ENCODE measurements at regions of chr1 and their contacts with region 1.

Region 1: GRCh38 chr1:209354111-209354839 is 229.2 kb upstream of the CAMK1G start:
- DNase-seq: peak; percentile 83
- ATAC-seq: peak; percentile 90
- H3K4me3 Mint-ChIP-seq: no peak overlapping the region
- H3K27ac Mint-ChIP-seq: peak overlapping the region; percentile 44; the same call in 1 of the 2 replicates
- H3K4me1 Mint-ChIP-seq: peaks cover 61% of the 10 kb centered on the region
- H3K27me3 Mint-ChIP-seq: no peaks in the 10 kb centered on the region
- CTCF ChIP-seq: peak; percentile 84

Region 2: GRCh38 chr1:209207701-209208286 is 146.5 kb before region 1 on chr1:
- CTCF ChIA-PET with region 1: interaction called, 34 read pairs
- POLR2A ChIA-PET with region 1: no interaction called
- DNase-seq: peak; percentile 83
- ATAC-seq: peak; percentile 91
- H3K4me3 Mint-ChIP-seq: peak overlapping the region; percentile 65
- H3K27ac Mint-ChIP-seq: no peak overlapping the region
- H3K4me1 Mint-ChIP-seq: peaks cover 24% of the 10 kb centered on the region
- H3K27me3 Mint-ChIP-seq: peaks cover 9% of the 10 kb centered on the region
- CTCF ChIP-seq: peak; percentile 50; the same call in 1 of the 2 replicates

Region 3: DNA sequence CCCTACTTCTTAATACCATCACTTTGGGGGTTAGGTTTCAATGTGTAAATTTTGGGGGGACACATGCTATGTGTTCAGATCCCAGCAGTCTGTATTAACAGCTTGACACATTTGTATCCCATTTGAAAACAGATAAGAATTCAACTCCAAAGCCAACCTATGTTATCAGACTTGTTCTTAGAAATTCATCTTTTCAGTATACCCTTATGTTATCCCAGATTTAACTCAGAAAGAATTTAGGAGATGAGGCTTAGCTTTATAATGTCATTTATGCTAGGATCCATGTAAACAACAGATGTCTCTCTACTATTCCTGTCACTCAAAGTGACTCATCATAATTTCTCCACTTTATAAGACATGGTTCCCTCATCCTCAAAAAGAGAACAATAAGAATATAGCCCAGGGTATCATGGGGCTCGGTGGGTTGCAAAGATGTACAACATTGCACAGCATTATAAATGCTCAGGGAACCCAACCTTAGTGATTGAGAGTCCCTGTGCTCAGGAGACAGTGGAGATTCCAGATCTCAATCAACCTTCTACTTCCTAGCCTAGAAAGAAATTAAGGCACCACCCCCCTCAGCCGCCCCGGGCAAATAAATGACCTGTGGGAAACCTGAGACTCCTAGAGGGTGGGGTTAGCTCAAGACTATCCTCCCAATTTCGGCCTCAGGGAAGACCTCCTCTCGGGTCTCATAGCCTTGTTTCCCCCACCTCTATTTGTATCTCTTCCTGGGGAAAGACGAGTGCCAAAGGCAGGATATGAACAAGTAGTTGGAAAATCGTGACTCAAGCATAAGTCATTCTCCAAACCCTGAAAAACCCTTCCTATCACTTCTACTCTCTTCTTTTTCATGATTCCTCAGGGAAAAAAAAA is 35.9 kb before region 1 on chr1:
- CTCF ChIA-PET with region 1: no interaction called
- POLR2A ChIA-PET with region 1: no interaction called
- DNase-seq: no peak
- ATAC-seq: peak; percentile 36; the same call in 1 of the 2 replicates
- H3K4me3 Mint-ChIP-seq: no peak overlapping the region
- H3K27ac Mint-ChIP-seq: no peak overlapping the region
- H3K4me1 Mint-ChIP-seq: peaks cover 16% of the 10 kb centered on the region
- H3K27me3 Mint-ChIP-seq: no peaks in the 10 kb centered on the region; the same call in 1 of the 2 replicates
- CTCF ChIP-seq: no peak

Region 4: GRCh38 chr1:209344156-209344555 is 10.1 kb before region 1 on chr1:
- CTCF ChIA-PET with region 1: interaction called, 13 read pairs
- POLR2A ChIA-PET with region 1: no interaction called
- DNase-seq: no peak
- ATAC-seq: no peak
- H3K4me3 Mint-ChIP-seq: no peak overlapping the region
- H3K27ac Mint-ChIP-seq: no peak overlapping the region
- H3K4me1 Mint-ChIP-seq: peaks cover 23% of the 10 kb centered on the region
- H3K27me3 Mint-ChIP-seq: no peaks in the 10 kb centered on the region
- CTCF ChIP-seq: no peak

Region 5: DNA sequence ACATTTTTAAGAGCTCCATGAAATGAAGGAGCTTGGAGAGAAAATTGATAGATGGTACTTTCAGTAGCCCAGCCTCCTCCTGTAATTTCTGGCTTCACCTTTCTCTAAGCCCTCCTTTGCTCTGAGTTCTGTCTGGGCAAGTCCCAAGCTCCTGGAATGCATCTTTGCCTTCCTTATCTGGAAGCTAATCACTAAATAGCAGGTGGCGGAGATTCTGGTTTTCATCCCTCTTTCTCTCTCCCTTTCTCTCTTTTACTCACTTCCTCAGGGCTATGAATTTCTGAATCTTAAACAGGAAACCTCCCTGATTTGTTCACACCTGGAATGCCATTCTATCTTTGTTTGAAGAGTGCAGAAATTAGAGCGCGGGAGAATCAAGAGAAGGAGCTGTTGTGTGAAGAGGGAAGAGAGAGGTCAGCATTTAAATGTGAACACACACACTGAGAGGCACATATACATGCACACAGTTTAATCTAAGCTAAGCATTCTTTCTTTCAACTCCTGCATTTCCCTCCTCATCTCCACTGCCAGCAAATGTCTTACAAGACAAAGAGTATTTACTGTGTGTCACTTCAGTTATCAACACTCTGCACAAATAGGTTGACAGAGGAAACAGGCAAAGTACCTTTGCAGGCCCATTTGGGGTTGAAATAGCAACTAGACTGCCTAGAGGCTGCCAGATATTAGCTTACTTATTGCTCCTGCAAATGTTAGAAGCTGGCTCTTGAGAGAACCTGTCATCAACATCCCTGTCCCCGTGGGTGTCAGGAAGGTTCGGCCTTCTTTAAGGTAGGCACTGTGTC is 29.8 kb after region 1 on chr1:
- CTCF ChIA-PET with region 1: interaction called, 12 read pairs
- POLR2A ChIA-PET with region 1: no interaction called
- DNase-seq: no peak
- ATAC-seq: peak; percentile 78
- H3K4me3 Mint-ChIP-seq: peak overlapping the region; percentile 11; the same call in 1 of the 2 replicates
- H3K27ac Mint-ChIP-seq: peak overlapping the region; percentile 99
- H3K4me1 Mint-ChIP-seq: peaks cover 89% of the 10 kb centered on the region
- H3K27me3 Mint-ChIP-seq: no peaks in the 10 kb centered on the region; the same call in 1 of the 2 replicates
- CTCF ChIP-seq: no peak

Region 6: DNA sequence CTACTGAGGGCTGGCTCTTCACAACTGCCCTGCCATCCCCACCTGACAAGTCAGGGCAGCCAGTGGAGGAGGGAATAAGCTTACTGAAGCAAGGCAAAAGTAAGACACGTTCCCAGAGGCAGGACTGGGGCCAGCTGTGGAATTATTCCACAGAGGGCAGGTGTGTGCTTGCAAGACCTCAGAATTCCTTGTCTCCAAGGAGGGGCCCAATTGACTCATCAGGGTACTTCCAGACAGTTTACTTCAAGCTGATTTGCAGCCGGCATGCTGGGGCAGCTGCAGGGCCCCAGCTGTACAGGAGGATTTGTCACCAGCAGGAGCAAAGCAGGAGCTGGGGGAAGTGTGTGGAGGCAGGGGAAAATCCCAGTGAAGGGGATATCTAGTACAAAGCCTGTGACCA is 61.8 kb after region 1 on chr1:
- CTCF ChIA-PET with region 1: interaction called, 12 read pairs
- POLR2A ChIA-PET with region 1: no interaction called
- DNase-seq: no peak
- ATAC-seq: no peak; the same call in 1 of the 2 replicates
- H3K4me3 Mint-ChIP-seq: no peak overlapping the region
- H3K27ac Mint-ChIP-seq: no peak overlapping the region
- H3K4me1 Mint-ChIP-seq: peaks cover 69% of the 10 kb centered on the region
- H3K27me3 Mint-ChIP-seq: peaks cover 78% of the 10 kb centered on the region
- CTCF ChIP-seq: no peak

Region 7: DNA sequence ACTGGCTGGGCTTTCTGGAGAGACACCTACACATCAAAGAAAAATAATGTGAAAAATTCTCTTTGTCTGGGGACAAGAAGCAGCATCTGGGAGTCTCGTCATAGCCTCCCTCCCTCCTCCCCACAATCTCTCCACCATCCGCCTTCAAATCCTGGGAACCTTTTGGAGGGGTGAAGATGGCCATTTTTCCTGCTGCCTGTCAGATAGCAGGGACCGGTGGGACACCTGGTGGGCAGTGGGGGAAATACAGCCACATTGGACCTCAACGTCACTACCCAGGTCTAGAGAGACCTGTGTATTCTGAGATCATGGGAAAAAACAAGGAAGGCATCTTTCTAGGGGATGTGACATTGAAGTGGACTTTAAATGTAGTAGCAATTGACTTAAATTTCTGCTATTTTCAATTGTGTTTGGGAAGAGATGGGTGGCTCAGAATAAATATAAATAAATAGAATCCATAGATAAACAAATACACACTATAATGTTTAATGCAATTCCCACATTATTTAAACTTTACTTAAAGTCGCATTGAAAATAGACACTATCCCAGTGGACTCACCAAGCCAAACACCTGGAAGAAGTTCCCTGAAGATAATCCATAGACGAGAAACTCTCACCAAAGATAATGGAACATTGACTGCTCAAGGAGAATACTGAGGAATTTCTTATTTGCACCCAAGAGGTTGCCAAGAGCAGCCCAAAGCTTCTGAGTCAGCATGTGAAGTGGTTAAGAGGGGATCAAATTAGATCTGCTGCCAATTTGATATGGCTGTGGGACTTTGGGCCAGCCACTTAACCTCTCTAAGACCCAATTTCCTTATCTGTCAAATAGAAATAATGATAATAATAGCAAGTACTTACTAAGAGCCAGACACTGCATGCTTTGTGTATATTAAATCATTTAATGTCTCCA is 81.6 kb after region 1 on chr1:
- CTCF ChIA-PET with region 1: interaction called, 18 read pairs
- POLR2A ChIA-PET with region 1: interaction called, 5 read pairs
- DNase-seq: peak; percentile 96
- ATAC-seq: peak; percentile 72
- H3K4me3 Mint-ChIP-seq: no peak overlapping the region
- H3K27ac Mint-ChIP-seq: no peak overlapping the region
- H3K4me1 Mint-ChIP-seq: peaks cover 50% of the 10 kb centered on the region
- H3K27me3 Mint-ChIP-seq: peaks cover 2% of the 10 kb centered on the region; the same call in 1 of the 2 replicates
- CTCF ChIP-seq: peak; percentile 94

Region 8: GRCh38 chr1:209513226-209513625 is 159.0 kb after region 1 on chr1:
- CTCF ChIA-PET with region 1: interaction called, 15 read pairs
- POLR2A ChIA-PET with region 1: no interaction called
- DNase-seq: no peak
- ATAC-seq: peak; percentile 95
- H3K4me3 Mint-ChIP-seq: no peak overlapping the region
- H3K27ac Mint-ChIP-seq: no peak overlapping the region
- H3K4me1 Mint-ChIP-seq: peaks cover 17% of the 10 kb centered on the region
- H3K27me3 Mint-ChIP-seq: no peaks in the 10 kb centered on the region
- CTCF ChIP-seq: peak; percentile 63